MCF 10A (cell line): ENCODE measurements at regions of chr7 and their contacts with region 1.

Region 1: GRCh38 chr7:94395141-94396036 is 694 bp downstream of the COL1A2 start:
- DNase-seq: peak; percentile 81
- H3K4me3 Mint-ChIP-seq: no peak overlapping the region
- H3K27ac Mint-ChIP-seq: no peak overlapping the region
- H3K4me1 Mint-ChIP-seq: no peaks in the 10 kb centered on the region
- H3K27me3 Mint-ChIP-seq: no peaks in the 10 kb centered on the region
- CTCF ChIP-seq: peak; percentile 65

Region 2: GRCh38 chr7:93715234-93715633 is 680.2 kb before region 1 on chr7:
- CTCF ChIA-PET with region 1: no interaction called
- POLR2A ChIA-PET with region 1: no interaction called
- intact Hi-C with region 1: loop called (anchors 2 kb)
- DNase-seq: peak; percentile 54
- H3K4me3 Mint-ChIP-seq: no peak overlapping the region
- H3K27ac Mint-ChIP-seq: no peak overlapping the region
- H3K4me1 Mint-ChIP-seq: peaks cover 18% of the 10 kb centered on the region
- H3K27me3 Mint-ChIP-seq: peaks cover 74% of the 10 kb centered on the region
- CTCF ChIP-seq: peak; percentile 48

Region 3: DNA sequence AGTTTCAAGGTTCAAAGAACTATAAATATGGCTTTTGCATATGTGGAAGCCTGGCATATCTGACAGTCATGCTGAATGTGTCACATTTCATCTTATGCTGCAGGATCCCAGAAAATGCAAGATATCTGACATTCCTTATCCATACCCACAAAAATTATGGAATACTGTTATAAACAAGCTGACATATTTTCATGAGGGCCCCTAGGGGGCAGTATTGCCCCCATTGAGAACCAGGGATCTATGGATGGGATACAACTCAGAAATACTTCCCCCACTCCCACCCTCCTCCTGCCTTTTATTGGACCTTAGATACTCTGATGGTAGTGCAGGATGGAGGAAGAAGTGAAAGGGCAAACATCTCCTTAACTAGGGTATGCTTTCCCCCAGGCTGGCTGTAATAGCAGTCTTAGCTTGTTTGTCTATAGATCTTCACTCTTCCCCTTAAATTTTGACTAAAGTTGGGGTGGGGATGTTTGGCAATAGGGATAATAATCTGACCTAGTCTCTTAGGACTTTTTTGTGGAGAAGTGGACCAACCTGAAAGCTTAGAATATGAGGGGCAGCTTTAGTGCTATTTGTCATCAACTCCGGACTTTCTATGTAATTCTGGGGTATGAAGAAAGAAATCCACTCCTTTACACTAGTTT is 492.5 kb before region 1 on chr7:
- CTCF ChIA-PET with region 1: interaction called, 3 read pairs
- POLR2A ChIA-PET with region 1: no interaction called
- intact Hi-C with region 1: loop called (anchors 10 kb)
- DNase-seq: peak; percentile 68
- H3K4me3 Mint-ChIP-seq: no peak overlapping the region
- H3K27ac Mint-ChIP-seq: no peak overlapping the region
- H3K4me1 Mint-ChIP-seq: no peaks in the 10 kb centered on the region
- H3K27me3 Mint-ChIP-seq: no peaks in the 10 kb centered on the region
- CTCF ChIP-seq: peak; percentile 80

Region 4: GRCh38 chr7:94295850-94296249 is 99.5 kb before region 1 on chr7:
- CTCF ChIA-PET with region 1: interaction called, 128 read pairs
- POLR2A ChIA-PET with region 1: interaction called, 11 read pairs
- intact Hi-C with region 1: loop called (anchors 1 kb)
- DNase-seq: peak; percentile 38
- H3K4me3 Mint-ChIP-seq: no peak overlapping the region
- H3K27ac Mint-ChIP-seq: no peak overlapping the region
- H3K4me1 Mint-ChIP-seq: peaks cover 28% of the 10 kb centered on the region
- H3K27me3 Mint-ChIP-seq: no peaks in the 10 kb centered on the region
- CTCF ChIP-seq: peak; percentile 37

Region 5: GRCh38 chr7:94368371-94368791 is 27.0 kb before region 1 on chr7:
- CTCF ChIA-PET with region 1: interaction called, 12 read pairs
- POLR2A ChIA-PET with region 1: interaction called, 3 read pairs
- intact Hi-C with region 1: no loop called
- DNase-seq: peak; percentile 70
- H3K4me3 Mint-ChIP-seq: peak overlapping the region; percentile 34
- H3K27ac Mint-ChIP-seq: peak overlapping the region; percentile 82
- H3K4me1 Mint-ChIP-seq: peaks cover 17% of the 10 kb centered on the region
- H3K27me3 Mint-ChIP-seq: no peaks in the 10 kb centered on the region
- CTCF ChIP-seq: no peak

Region 6: GRCh38 chr7:94423863-94424735 is 28.7 kb after region 1 on chr7:
- CTCF ChIA-PET with region 1: no interaction called
- POLR2A ChIA-PET with region 1: no interaction called
- intact Hi-C with region 1: no loop called
- DNase-seq: peak; percentile 52
- H3K4me3 Mint-ChIP-seq: no peak overlapping the region
- H3K27ac Mint-ChIP-seq: peak overlapping the region; percentile 99
- H3K4me1 Mint-ChIP-seq: peaks cover 8% of the 10 kb centered on the region
- H3K27me3 Mint-ChIP-seq: no peaks in the 10 kb centered on the region
- CTCF ChIP-seq: no peak

Region 7: GRCh38 chr7:94591176-94591575 is 195.8 kb after region 1 on chr7:
- CTCF ChIA-PET with region 1: no interaction called
- POLR2A ChIA-PET with region 1: no interaction called
- intact Hi-C with region 1: no loop called
- DNase-seq: no peak
- H3K4me3 Mint-ChIP-seq: no peak overlapping the region
- H3K27ac Mint-ChIP-seq: no peak overlapping the region
- H3K4me1 Mint-ChIP-seq: no peaks in the 10 kb centered on the region
- H3K27me3 Mint-ChIP-seq: no peaks in the 10 kb centered on the region
- CTCF ChIP-seq: no peak